Panc1 (cell line): ENCODE measurements at regions of chr18 and their contacts with region 1.

Region 1: DNA sequence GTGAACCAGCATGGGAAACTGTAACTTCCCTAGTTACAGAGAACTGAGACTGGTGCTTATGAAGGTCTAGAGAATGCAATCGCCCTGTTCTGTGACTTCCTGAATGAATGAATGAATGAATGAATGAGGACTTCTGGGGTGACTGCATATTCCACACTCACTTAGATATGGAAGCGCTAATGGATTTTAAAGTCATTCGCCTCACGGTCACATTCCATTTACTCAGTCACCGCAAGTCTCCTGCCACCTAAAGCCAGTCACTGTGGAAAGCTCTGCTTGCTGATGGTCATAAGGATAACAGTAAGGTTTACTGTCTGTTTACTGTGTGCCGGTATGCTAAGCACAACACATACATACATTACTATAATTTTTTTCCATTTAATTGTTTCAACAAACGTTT is 138.2 kb downstream of the CABLES1 start:
- DNase-seq: no peak
- ATAC-seq: peak; percentile 74
- H3K4me3 ChIP-seq: no peak overlapping the region
- H3K27ac ChIP-seq: peak overlapping the region; percentile 77
- H3K4me1 ChIP-seq: peaks cover 11% of the 10 kb centered on the region
- H3K27me3 ChIP-seq: no peaks in the 10 kb centered on the region
- CTCF ChIP-seq: no peak

Region 2: GRCh38 chr18:23245461-23245860 is 28.0 kb before region 1 on chr18:
- CTCF ChIA-PET with region 1: no interaction called
- POLR2A ChIA-PET with region 1: interaction called, 11 read pairs
- in situ Hi-C with region 1: no loop called
- intact Hi-C with region 1: no loop called
- DNase-seq: no peak
- ATAC-seq: no peak
- H3K4me3 ChIP-seq: no peak overlapping the region
- H3K27ac ChIP-seq: no peak overlapping the region
- H3K4me1 ChIP-seq: no peaks in the 10 kb centered on the region
- H3K27me3 ChIP-seq: no peaks in the 10 kb centered on the region
- CTCF ChIP-seq: no peak

Region 3: GRCh38 chr18:23532848-23533247 is 259.3 kb after region 1 on chr18:
- CTCF ChIA-PET with region 1: no interaction called
- POLR2A ChIA-PET with region 1: no interaction called
- in situ Hi-C with region 1: no loop called
- intact Hi-C with region 1: no loop called
- DNase-seq: no peak
- ATAC-seq: no peak
- H3K4me3 ChIP-seq: no peak overlapping the region
- H3K27ac ChIP-seq: no peak overlapping the region
- H3K4me1 ChIP-seq: peaks cover 5% of the 10 kb centered on the region; the same call in 1 of the 2 replicates
- H3K27me3 ChIP-seq: no peaks in the 10 kb centered on the region
- CTCF ChIP-seq: no peak